Sigmoid colon (tissue), 7 donors: ENCODE measurements at regions of chr17 and their contacts with region 1.

Region 1: DNA sequence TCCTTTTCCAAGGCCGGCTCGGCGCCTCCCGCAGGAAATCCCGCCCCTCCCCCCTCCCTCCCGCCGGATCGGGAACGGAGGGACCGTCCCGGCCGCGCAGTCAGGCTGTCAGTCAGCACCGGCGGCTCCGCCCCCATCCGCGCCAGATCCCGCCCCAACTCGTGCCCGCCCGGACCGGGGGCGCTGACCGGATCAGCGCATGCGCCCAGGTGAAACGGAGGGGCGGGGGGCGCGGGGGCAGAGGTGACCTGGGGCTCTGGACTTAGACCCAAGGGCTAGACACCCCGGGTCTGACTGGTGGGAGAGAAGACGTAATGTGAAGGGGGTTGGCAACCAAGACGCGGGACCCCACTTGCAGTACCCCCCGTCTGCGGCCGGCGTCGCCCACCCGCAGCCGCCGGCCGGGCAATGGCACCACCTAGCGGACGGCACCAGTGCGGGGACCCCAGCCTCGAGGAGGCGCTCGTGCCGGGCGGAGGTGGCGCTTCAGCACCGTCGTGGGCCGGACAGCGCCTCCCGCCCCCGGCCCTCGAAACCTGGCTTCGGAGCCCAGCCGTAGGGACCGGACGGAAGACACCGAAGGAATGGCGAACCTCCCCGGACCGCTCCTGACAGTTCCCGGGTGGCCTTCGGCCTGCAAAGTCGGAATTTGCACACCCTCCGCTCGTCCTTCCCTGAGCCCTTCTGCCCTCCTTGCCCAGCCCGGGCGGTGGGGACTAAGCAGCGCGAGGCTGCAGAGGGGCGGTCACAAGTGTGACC is at the start of gene CASKIN2:
- DNase-seq: peak; percentile 98
- H3K4me3 ChIP-seq: peak within 1 kb of the TSS; percentile 73 to 96 (median 89)
- H3K27ac ChIP-seq: peak within 1 kb of the TSS; percentile 85 to 91 (median 90)
- H3K4me1 ChIP-seq: peaks cover 5 to 64% (median 51%) of the 10 kb centered on the region in 4 donors
- H3K27me3 ChIP-seq: no peaks in the 10 kb centered on the region
- CTCF ChIP-seq: peak; percentile 96 to 99 (median 98)
- EP300 ChIP-seq: no peak
- POLR2A ChIP-seq: no peak
- total RNA-seq, gene CASKIN2: 10.0 to 14.7 (median 10.2) TPM

Region 2: DNA sequence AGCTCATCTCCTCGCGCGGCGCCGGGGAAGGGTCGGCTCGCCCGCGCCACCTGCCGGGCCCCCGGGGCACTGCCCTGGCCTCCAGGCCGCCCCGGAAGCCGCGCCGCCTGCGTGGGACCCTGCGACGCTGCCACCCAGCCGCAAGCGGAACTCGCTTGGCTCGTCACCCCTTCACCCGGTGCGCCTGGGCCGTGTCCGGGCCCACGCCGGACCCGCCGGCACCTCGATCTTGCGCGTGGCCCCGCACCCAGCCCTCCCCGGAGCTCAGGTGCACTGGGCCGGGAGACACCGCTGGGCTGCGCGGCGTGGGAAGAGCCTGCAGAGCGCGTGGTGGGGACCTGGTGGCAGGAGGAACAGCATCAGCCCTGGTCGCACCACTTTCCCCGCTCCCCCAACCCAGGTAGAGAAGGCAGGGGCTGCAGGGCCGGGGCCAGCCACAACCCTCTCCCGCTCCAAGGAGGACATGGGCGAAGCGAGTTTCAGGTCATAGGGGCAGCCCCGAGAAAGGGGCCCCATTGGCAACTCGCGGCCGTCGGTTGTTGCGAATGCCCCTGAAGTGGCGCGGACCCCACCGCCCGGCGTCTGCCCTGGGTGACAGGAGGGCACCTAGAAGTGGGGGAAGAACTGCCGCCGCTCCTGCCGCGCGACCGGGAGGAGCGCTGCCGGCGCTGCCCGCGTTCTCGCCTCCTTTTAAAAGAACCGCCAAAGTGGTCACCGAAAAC is 244.3 kb before region 1 on chr17:
- intact Hi-C with region 1: loop called (anchors 5 kb)
- DNase-seq: peak; percentile 86
- H3K4me3 ChIP-seq: peak overlapping the region; percentile 47 to 89 (median 82)
- H3K27ac ChIP-seq: peak overlapping the region; percentile 94 to 99 (median 96)
- H3K4me1 ChIP-seq: peaks cover 0 to 32% (median 25%) of the 10 kb centered on the region in 4 donors
- H3K27me3 ChIP-seq: no peaks in the 10 kb centered on the region
- CTCF ChIP-seq: peak; percentile 23 to 74 (median 34)
- EP300 ChIP-seq: no peak
- POLR2A ChIP-seq: no peak

Region 3: GRCh38 chr17:75319904-75320691 is 195.6 kb before region 1 on chr17:
- intact Hi-C with region 1: loop called (anchors 5 kb)
- DNase-seq: no peak
- H3K4me3 ChIP-seq: no peak overlapping the region
- H3K27ac ChIP-seq: peak overlapping the region in 3 of 4 donors; percentile 12 to 62 (median 19)
- H3K4me1 ChIP-seq: peaks cover 0 to 25% (median 12%) of the 10 kb centered on the region in 4 donors
- H3K27me3 ChIP-seq: no peaks in the 10 kb centered on the region
- CTCF ChIP-seq: no peak
- EP300 ChIP-seq: no peak
- POLR2A ChIP-seq: no peak

Region 4: DNA sequence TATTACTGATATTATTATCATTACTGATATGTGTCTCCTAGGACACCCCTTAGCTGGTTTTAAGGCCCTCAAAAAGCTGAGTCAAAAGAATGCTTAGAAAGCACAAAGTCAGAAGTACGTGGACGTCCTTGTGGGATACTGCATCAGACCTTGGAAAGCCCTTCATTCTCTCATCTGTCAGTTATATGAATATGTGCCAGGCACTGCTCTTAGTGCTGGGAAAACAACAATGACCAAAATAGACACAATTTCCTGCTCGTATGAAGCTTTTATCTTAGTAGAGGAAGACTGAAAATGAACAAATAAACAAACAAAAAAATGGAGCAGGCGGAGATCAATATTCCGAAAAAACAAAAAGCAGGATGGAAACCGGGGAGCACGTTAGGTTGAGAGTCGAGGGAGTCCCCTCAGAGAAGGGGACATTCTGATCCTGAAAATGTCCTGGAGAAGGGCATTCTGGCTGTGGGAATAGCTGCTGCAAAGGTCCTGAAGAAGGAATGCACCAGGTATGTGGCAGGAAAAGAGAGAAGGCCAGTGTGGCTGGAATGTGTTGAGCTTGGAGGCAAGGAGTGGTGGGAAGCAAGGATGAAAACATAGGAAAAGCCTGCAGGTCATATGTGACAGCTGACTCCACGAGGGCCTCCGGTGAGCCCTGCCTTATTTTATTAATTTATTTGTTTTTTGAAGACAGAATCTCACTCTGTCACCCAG is 74.8 kb before region 1 on chr17:
- intact Hi-C with region 1: loop called (anchors 5 kb)
- DNase-seq: no peak
- H3K4me3 ChIP-seq: no peak overlapping the region
- H3K27ac ChIP-seq: peak overlapping the region in 1 of 4 donors; percentile 51
- H3K4me1 ChIP-seq: peaks cover 0 to 17% (median 15%) of the 10 kb centered on the region in 4 donors
- H3K27me3 ChIP-seq: no peaks in the 10 kb centered on the region
- CTCF ChIP-seq: no peak
- EP300 ChIP-seq: no peak
- POLR2A ChIP-seq: no peak

Region 5: GRCh38 chr17:75476271-75476671 is 39.4 kb before region 1 on chr17:
- intact Hi-C with region 1: loop called (anchors 5 kb)
- DNase-seq: no peak
- H3K4me3 ChIP-seq: peak overlapping the region in 2 of 4 donors; percentile 4 to 8
- H3K27ac ChIP-seq: peak overlapping the region; percentile 71 to 78 (median 74)
- H3K4me1 ChIP-seq: peaks cover 0 to 33% (median 30%) of the 10 kb centered on the region in 4 donors
- H3K27me3 ChIP-seq: no peaks in the 10 kb centered on the region
- CTCF ChIP-seq: no peak
- EP300 ChIP-seq: no peak
- POLR2A ChIP-seq: no peak